ENCODE measurements at regions of chr7 and their contacts with region 1.

Region 1: GRCh38 chr7:149883452-149883861 is 9.7 kb downstream of the ATP6V0E2 start:
- DNase-seq: peak; percentile 77
- H3K4me3 Mint-ChIP-seq: no peak overlapping the region
- H3K27ac Mint-ChIP-seq: peak overlapping the region; percentile 50
- H3K4me1 Mint-ChIP-seq: peaks cover 14% of the 10 kb centered on the region
- H3K27me3 Mint-ChIP-seq: no peaks in the 10 kb centered on the region

Region 2: GRCh38 chr7:149701495-149702240 is 181.8 kb before region 1 on chr7:
- CTCF ChIA-PET with region 1: no interaction called
- DNase-seq: no peak
- H3K4me3 Mint-ChIP-seq: no peak overlapping the region
- H3K27ac Mint-ChIP-seq: no peak overlapping the region
- H3K4me1 Mint-ChIP-seq: no peaks in the 10 kb centered on the region
- H3K27me3 Mint-ChIP-seq: peaks cover 20% of the 10 kb centered on the region

Region 3: GRCh38 chr7:149806726-149807125 is 76.7 kb before region 1 on chr7:
- CTCF ChIA-PET with region 1: interaction called, 10 read pairs
- DNase-seq: no peak
- H3K4me3 Mint-ChIP-seq: no peak overlapping the region
- H3K27ac Mint-ChIP-seq: no peak overlapping the region
- H3K4me1 Mint-ChIP-seq: no peaks in the 10 kb centered on the region
- H3K27me3 Mint-ChIP-seq: peaks cover 21% of the 10 kb centered on the region

Region 4: DNA sequence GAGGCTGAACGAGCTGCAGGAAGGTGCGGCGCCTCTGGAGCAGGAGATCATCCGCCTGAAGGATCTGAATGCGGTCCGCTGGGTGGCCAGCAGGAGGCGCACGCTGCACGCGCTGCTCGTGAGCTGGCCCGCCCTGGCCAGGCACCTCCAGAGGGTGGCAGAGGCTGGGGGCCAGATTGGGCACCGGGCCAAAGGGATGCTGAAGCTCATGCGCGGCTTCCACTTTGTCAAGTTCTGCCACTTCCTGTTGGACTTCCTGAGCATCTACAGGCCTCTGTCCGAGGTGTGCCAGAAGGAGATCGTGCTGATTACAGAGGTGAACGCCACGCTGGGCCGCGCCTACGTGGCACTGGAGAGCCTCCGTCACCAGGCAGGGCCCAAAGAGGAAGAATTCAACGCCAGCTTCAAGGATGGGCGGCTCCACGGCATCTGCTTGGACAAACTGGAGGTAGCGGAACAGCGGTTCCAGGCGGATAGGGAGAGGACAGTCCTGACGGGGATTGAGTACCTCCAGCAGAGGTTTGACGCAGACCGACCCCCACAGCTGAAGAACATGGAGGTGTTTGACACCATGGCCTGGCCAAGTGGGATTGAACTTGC is 21.9 kb before region 1 on chr7:
- CTCF ChIA-PET with region 1: interaction called, 10 read pairs
- DNase-seq: no peak
- H3K4me3 Mint-ChIP-seq: no peak overlapping the region
- H3K27ac Mint-ChIP-seq: no peak overlapping the region
- H3K4me1 Mint-ChIP-seq: peaks cover 70% of the 10 kb centered on the region
- H3K27me3 Mint-ChIP-seq: no peaks in the 10 kb centered on the region

Region 5: DNA sequence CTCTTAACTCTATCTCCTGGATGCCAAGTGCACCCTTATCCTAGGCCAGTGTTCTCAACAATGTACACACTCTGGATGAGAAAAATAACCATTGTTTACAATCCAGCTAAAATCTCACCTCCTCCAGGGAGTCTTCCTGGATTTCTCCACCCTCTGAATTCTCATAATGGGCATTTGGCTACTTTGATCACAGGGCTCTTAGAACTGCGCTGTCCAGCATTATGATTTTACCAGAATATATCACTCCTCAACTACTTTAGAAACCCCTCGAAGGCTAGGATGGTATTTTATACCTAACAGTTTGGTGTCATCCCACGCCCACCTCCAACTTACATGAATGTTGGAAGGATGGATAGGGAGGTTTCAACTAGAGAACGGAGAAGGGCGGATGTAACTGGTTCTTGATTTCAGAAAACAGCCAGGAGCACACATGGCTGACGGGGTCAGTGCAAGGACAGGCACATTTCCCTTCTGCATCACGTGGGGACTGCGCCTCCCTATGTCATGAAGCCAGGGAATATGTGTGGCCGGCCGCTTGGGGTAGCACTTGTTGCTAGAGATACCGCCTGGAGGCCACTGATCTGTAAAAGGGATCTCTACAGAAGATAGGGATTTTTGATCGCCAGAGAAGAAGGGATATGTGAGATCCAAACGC is 10.9 kb before region 1 on chr7:
- CTCF ChIA-PET with region 1: interaction called, 31 read pairs
- DNase-seq: peak; percentile 55
- H3K4me3 Mint-ChIP-seq: peak overlapping the region; percentile 78
- H3K27ac Mint-ChIP-seq: peak overlapping the region; percentile 85
- H3K4me1 Mint-ChIP-seq: peaks cover 86% of the 10 kb centered on the region
- H3K27me3 Mint-ChIP-seq: no peaks in the 10 kb centered on the region

Region 6: GRCh38 chr7:150003304-150003810 is 119.9 kb after region 1 on chr7:
- CTCF ChIA-PET with region 1: no interaction called
- DNase-seq: no peak
- H3K4me3 Mint-ChIP-seq: no peak overlapping the region
- H3K27ac Mint-ChIP-seq: no peak overlapping the region
- H3K4me1 Mint-ChIP-seq: no peaks in the 10 kb centered on the region
- H3K27me3 Mint-ChIP-seq: no peaks in the 10 kb centered on the region

Measured in activated naive CD4-positive, alpha-beta T cell treated with anti-CD3 and anti-CD28 coated beads, Interleukin-2, amount 10 ng/mL, durations not matched to agents 7 days and 5 days (primary cell).